Dendritic cell treated with granulocyte-macrophage colony-stimulating factor and Interleukin-4, amounts not matched to agents 40 ng/mL and 50 ng/mL, for 4 days (primary cell): ENCODE measurements at regions of chrX and their contacts with region 1.

Region 1: DNA sequence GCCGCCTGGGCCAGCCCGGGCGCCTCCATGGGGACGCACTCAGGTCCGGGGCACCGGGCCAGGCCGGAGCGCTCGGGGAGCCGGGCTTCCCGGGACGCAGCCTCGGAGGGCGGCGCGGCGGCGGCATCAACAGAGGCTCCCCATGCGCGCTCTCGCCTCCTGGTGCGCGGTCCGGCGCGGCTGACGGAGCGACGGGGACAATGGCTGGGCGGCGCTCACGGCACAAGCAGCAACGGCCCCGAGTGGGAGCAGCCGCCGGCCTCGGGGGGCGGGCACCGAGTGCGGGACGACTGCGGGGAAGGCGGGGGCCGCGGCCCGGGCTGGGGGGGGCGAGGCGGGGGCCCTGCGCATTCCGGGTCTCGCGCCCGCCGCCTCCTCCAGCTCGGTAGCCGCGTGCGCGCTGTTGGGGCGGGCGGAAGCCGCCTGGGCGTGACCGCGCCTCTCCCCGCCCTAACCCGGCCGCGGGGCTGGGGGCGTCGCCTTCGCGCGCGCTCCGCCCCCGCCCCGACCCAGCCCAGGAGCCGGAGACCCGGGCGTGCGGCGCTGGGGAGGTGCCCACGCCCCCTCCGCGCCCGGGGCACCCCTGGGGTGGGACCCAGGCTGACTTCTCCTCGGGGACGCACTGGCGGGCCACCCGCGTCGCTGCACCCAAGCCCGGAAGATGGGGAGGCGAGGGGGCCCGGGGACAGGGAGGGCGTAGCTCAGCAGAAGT is at the start of gene PRKX:
- H3K4me3 Mint-ChIP-seq: peak within 1 kb of the TSS; percentile 98
- H3K27ac Mint-ChIP-seq: peak within 1 kb of the TSS; percentile 86
- H3K4me1 Mint-ChIP-seq: peaks cover 6% of the 10 kb centered on the region
- H3K27me3 Mint-ChIP-seq: no peaks in the 10 kb centered on the region

Region 2: DNA sequence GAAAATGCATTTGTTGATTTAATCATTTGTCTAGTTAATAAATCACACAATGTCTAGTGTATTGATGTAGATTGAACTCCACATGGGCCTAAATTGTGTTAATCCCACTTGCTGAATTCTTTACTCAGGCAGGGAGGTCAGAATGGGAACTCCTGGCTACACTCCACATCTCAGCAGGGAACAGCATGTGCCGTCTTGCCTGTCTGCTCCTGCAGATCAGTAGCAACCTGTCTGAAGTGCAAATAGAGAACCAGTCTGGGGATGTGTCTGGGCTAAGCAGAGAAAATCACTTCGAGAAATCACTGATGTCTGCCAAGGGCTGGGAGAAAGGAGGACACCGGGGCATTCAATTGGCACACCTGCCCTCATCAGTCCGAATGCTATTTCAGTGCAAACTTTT is 350.4 kb before region 1 on chrX:
- intact Hi-C with region 1: no loop called
- H3K4me3 Mint-ChIP-seq: no peak overlapping the region
- H3K27ac Mint-ChIP-seq: no peak overlapping the region
- H3K4me1 Mint-ChIP-seq: no peaks in the 10 kb centered on the region
- H3K27me3 Mint-ChIP-seq: no peaks in the 10 kb centered on the region

Region 3: DNA sequence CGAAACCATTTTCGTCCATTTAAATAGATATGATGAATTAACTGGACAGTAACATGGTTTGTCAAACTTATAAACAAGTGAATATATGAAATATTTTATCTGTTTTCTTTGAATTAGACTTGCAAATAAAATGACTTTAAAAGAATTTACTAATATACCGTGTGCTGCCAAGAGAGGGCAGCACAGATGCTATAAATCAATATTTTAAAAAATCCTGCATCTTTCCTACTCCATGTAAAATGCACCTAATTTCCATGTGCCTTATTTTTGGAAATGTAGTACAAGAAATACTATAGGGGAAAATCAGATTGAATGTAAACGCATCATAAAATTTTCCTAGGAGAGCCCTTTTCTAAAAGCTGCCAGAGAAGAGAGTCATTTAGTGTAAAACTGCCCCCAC is 62.1 kb before region 1 on chrX:
- intact Hi-C with region 1: loop called (anchors 5 kb)
- H3K4me3 Mint-ChIP-seq: no peak overlapping the region
- H3K27ac Mint-ChIP-seq: no peak overlapping the region
- H3K4me1 Mint-ChIP-seq: no peaks in the 10 kb centered on the region
- H3K27me3 Mint-ChIP-seq: no peaks in the 10 kb centered on the region

Region 4: GRCh38 chrX:3690140-3690539 is 23.2 kb before region 1 on chrX:
- intact Hi-C with region 1: no loop called
- H3K4me3 Mint-ChIP-seq: no peak overlapping the region
- H3K27ac Mint-ChIP-seq: no peak overlapping the region
- H3K4me1 Mint-ChIP-seq: peaks cover 32% of the 10 kb centered on the region
- H3K27me3 Mint-ChIP-seq: no peaks in the 10 kb centered on the region

Region 5: GRCh38 chrX:3738509-3738908 is 25.1 kb after region 1 on chrX:
- intact Hi-C with region 1: no loop called
- H3K4me3 Mint-ChIP-seq: no peak overlapping the region
- H3K27ac Mint-ChIP-seq: no peak overlapping the region
- H3K4me1 Mint-ChIP-seq: no peaks in the 10 kb centered on the region
- H3K27me3 Mint-ChIP-seq: no peaks in the 10 kb centered on the region